Prostate gland (tissue), 2 donors: ENCODE measurements at regions of chr2 and their contacts with region 1.

Region 1: DNA sequence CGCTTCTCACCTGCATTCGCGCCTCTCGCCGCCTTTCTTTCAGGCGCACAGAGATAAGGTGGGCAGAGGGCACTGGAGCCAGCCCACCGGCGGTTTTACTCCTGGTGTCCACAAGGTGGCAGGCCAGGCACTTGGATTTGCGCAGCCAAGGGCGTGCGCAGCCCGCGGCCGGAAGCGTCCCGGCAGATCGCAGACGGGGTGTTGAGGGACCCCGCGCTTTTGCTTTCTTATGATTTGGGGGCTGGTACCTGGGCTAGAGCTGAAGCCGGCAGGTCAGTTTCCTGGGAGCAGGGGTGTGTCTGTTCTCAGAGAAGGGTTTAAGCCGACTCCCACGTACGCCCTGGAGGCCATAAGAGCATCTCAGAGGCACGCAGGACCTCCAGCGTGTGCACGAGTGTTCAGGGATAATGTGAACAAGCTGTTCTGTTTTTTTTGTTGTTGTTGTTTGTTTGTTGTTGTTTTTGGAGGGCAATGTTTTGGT is 305.6 kb upstream of the CXCR4 start:
- DNase-seq: peak; percentile 49
- H3K4me3 ChIP-seq: peak overlapping the region; percentile 12 to 22
- H3K27ac ChIP-seq: no peak overlapping the region
- H3K4me1 ChIP-seq: no peaks in the 10 kb centered on the region
- H3K27me3 ChIP-seq: peaks cover 4% of the 10 kb centered on the region
- CTCF ChIP-seq: peak; percentile 67 to 90 (median 80)
- POLR2A ChIP-seq: no peak

Region 2: GRCh38 chr2:137838255-137839092 is 1414.9 kb after region 1 on chr2:
- intact Hi-C with region 1: loop called (anchors 5 kb)
- DNase-seq: no peak
- H3K4me3 ChIP-seq: no peak overlapping the region
- H3K27ac ChIP-seq: no peak overlapping the region
- H3K4me1 ChIP-seq: no peaks in the 10 kb centered on the region
- H3K27me3 ChIP-seq: no peaks in the 10 kb centered on the region
- CTCF ChIP-seq: peak; percentile 33 to 79 (median 70)
- POLR2A ChIP-seq: no peak